ENCODE measurements at regions of chr12 and their contacts with region 1.

Region 1: DNA sequence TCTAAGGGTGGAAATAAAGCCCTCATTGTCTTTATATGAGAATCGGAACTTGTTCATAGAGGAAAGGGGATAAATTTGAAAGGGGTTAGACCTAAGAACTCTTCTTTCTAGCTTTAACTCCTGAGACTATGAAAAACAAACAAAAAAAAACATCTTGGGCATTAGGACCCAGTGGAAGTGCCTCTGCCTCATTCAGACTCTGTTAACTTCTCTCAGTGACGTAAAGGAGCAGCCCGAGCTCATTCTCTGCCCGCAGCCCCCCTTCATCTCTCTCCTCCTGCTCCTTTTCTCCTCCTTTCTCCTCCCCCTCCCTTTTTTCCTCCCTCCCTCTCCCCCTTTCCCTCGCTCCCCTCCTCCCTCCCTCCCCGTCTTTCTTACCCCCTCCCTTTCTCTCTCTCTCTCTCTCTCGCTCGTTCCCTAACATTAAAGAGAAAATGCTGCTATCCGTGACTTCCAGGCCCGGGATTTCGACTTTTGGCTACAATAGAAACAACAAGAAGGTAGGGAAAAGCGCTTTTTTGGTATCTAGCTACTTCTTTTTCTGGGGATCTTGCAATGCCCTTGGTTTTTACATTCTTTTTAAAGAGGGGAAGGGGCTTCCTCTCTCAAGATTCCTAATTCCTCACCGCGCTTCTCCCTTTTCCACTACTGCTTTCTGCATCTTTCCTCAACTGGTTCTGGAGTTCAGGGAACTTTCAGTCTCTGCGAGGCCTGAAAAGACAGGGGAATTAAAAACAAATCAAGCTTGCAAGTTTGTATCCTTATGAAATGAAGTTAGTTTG is at the start of gene RBMS2:
- DNase-seq: peak; percentile 82 to 90 (median 88)
- ATAC-seq: peak; percentile 95 to 98
- H3K4me3 ChIP-seq: peak within 1 kb of the TSS; percentile 83
- H3K27ac ChIP-seq: peak within 1 kb of the TSS; percentile 92
- H3K4me1 ChIP-seq: no peaks in the 10 kb centered on the region
- H3K27me3 ChIP-seq: no peaks in the 10 kb centered on the region
- total RNA-seq, gene RBMS2: 29.6 to 41.4 (median 37.6) TPM

Region 2: DNA sequence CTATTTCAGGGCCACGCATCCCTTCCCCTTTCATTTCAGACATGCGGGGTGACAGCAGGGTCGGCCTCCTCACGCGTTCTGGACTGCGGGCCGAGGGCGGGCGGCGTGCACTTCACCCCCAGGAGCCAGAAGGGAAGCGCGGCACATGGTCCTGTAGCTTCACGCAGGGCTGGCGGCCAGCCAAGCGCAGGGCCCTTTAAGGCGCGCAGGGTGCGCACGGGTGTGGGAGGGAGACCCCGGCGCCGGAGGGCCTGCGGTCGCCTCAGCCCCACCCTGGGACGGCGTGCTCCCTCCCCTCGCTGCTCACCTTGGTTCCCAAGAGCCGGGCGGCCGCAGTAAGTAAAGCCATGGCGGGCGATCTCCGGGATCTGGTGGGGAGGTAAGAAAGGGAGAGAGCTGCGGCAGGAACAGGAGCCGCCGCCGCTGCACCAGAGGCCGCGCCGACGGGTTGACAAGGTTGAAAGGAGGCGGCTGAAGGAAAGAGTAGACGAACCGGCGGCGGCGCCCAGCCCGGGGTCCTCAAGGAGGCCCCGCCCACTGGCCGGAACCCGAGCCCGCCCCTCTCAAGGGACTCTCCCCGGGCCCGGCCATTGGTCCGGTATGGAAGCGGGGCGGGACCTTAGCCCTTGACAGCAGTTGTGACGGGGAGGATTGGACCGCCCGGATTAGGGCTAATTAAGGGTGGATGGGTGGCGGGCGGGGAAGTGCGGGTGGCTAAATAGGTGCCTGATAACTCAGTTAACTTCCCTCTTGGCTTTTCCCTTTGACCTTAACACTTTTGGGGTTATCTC is 221.7 kb before region 1 on chr12 and contains the start of gene CS:
- intact Hi-C with region 1: no loop called
- DNase-seq: peak; percentile 99
- ATAC-seq: peak; percentile 98 to 99
- H3K4me3 ChIP-seq: peak within 1 kb of the TSS; percentile 67
- H3K27ac ChIP-seq: peak within 1 kb of the TSS; percentile 95
- H3K4me1 ChIP-seq: peaks cover 7% of the 10 kb centered on the region
- H3K27me3 ChIP-seq: no peaks in the 10 kb centered on the region
- total RNA-seq, gene CS: 454 to 594 (median 571) TPM

Region 3: DNA sequence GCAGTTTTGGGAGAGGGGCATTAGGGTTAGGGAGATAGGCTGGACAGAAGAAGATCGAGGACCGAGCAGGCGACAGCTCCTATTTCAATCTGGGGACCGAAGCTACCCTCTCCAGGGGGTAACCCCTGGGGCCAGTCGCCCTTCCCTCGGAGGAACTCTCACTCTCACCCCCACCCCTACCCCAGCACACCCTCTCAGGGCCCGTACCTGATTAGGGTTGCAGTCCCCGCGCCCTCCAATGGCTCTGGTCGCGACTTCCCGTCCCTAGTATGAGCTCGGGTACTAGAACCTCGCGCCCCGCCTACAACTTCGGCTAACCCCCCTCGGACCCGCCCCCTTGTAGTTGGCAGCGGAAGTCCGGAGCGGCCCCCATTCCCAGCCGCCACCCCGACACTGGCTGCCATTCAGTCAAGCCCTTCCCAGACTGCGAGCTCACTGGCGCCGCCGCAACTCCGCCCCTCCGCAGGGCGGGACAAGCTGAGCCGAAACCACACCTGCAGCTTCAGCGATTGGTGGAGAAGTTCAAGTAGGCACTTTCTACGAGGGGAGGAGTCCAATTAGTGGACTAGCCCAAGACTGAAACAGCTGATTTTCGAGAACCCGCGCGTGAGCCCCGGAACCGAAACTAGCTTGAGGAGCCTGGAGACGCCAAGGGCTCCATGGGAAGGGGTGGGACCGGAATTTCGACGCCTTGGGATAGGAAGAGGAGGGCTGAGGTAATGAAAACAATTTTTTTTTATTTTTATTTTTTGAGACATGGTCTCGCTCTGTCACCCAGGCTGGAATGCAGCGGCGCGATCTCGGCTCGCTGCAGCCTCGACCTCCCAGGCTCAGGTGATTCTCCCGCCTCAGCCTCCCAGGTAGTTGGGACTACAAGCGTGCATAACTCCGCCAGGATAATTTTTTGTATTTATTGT is 161.7 kb before region 1 on chr12 and contains the start of gene STAT2:
- intact Hi-C with region 1: no loop called
- DNase-seq: peak; percentile 100
- ATAC-seq: peak; percentile 99
- H3K4me3 ChIP-seq: peak within 1 kb of the TSS; percentile 72
- H3K27ac ChIP-seq: peak within 1 kb of the TSS; percentile 84
- H3K4me1 ChIP-seq: peaks cover 2% of the 10 kb centered on the region
- H3K27me3 ChIP-seq: no peaks in the 10 kb centered on the region
- total RNA-seq, gene STAT2: 44.6 to 67.6 (median 53.5) TPM

Region 4: DNA sequence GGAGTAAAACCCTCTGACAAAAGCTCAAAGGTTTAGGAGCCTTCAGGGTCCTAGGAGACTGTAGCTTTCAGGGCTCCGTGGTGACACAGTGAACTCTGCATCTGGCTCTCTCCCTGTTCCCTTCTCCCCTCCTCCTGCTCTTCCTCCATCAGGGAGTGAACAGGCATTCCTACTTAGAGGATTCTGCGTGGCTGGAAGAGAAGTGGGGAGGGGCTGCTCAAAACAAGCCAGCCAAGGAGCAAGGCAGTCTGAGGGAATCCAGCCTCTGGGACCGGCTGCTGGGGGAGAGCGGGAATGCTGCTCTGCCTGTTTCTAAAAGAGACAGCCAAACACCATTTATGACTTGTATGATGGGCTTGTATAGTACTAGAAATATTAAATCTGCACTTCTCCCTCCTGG is 49.3 kb after region 1 on chr12:
- intact Hi-C with region 1: loop called in 1 of 4 experiments (anchors 5 kb)
- DNase-seq: peak in 2 of 3 donors; percentile 53 to 55
- ATAC-seq: peak; percentile 8 to 12
- H3K4me3 ChIP-seq: no peak overlapping the region
- H3K27ac ChIP-seq: no peak overlapping the region
- H3K4me1 ChIP-seq: peaks cover 6% of the 10 kb centered on the region
- H3K27me3 ChIP-seq: no peaks in the 10 kb centered on the region

Region 5: GRCh38 chr12:56724972-56725722 is 203.4 kb after region 1 on chr12 and contains the start of gene NACA:
- intact Hi-C with region 1: no loop called
- DNase-seq: peak; percentile 99 to 100 (median 99)
- ATAC-seq: peak; percentile 98
- H3K4me3 ChIP-seq: peak within 1 kb of the TSS; percentile 89
- H3K27ac ChIP-seq: peak within 1 kb of the TSS; percentile 92
- H3K4me1 ChIP-seq: peaks cover 19% of the 10 kb centered on the region
- H3K27me3 ChIP-seq: no peaks in the 10 kb centered on the region
- total RNA-seq, gene NACA: 541 to 618 (median 568) TPM

Region 6: GRCh38 chr12:57693317-57693658 is 1171.5 kb after region 1 on chr12:
- intact Hi-C with region 1: no loop called
- DNase-seq: no peak
- ATAC-seq: peak; percentile 1 to 3
- H3K4me3 ChIP-seq: peak overlapping the region; percentile 33
- H3K27ac ChIP-seq: peak overlapping the region; percentile 70
- H3K4me1 ChIP-seq: peaks cover 3% of the 10 kb centered on the region
- H3K27me3 ChIP-seq: no peaks in the 10 kb centered on the region